Heart right ventricle (tissue), 16 donors: ENCODE measurements at regions of chr2 and their contacts with region 1.

Region 1: DNA sequence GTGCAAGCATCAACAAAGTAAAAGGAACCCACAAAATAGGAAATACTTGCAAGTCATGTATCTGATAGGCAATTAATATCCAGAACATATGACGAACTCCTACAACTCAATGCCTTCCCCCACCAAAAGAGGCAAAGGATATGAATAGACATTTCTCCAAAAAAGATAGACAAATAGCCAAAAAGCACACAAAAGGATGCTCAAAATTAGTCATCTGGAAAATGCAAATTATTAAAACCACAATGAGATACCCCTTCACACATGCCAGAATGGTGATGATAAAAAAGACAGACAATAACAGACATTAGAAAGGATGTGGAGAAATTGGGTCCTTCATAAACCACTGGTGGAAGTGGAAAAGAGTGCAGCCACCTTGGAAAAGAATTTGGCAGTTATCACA is 76.4 kb downstream of the RIF1 start:
- DNase-seq: no peak
- ATAC-seq: no peak
- H3K4me3 ChIP-seq: no peak overlapping the region
- H3K27ac ChIP-seq: no peak overlapping the region
- H3K4me1 ChIP-seq: no peaks in the 10 kb centered on the region
- H3K27me3 ChIP-seq: no peaks in the 10 kb centered on the region
- CTCF ChIP-seq: no peak

Region 2: GRCh38 chr2:150762571-150762970 is 723.5 kb before region 1 on chr2:
- intact Hi-C with region 1: loop called in 1 of 10 experiments (anchors 5 kb)
- DNase-seq: no peak
- ATAC-seq: no peak
- H3K4me3 ChIP-seq: no peak overlapping the region
- H3K27ac ChIP-seq: no peak overlapping the region
- H3K4me1 ChIP-seq: no peaks in the 10 kb centered on the region
- H3K27me3 ChIP-seq: no peaks in the 10 kb centered on the region
- CTCF ChIP-seq: no peak